ENCODE measurements at regions of chr2 and their contacts with region 1.

Region 1: DNA sequence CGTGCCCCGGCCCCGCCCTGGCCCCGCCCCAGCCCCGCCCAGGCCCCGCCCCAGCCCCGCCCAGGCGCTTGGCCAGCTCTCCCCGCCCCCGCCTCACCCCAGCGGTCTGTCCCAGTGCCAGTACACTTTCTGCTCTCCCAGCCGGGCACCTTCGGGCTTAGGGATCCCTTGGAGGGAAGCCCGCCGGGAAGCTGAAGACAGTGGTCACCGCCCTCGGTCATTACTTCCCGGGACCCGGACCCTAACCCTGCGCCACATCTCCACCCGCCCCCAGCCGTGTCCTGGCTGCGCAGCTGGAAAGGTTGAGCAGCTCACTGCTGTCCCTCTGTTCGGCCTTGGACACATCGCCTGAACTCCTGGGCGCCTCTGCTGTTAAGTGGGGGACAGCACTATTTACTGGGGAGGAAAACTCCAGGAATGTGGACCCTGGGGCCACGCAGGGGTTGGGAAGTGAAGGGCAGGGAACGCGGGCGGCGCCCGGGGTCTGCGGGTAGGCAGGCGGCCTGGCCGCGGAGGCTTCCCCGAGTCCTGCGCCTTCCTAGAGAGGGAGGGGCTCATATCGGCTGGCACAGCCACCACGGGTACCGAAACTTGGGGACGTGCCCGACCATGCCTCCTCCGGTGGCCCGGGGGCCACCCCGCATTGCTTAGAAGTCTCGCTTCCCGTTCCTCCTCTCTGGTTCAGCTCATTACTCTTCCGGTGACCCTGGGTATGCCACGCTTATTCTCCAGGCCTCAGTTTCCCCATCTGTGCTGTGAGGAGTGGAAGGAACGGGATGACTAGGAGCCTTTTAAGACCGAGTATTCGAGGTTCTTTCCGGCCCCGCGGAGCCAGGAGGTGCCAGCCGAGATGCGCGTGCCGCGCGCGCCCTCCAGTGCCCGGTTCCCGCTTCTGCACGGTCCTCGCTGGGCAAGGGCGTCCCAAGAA is 121.0 kb downstream of the GYPC start:
- ATAC-seq: peak; percentile 86 to 92 (median 88)
- H3K4me3 ChIP-seq: peak overlapping the region; percentile 32 to 61 (median 47)
- H3K27ac ChIP-seq: no peak overlapping the region
- H3K4me1 ChIP-seq: peaks cover 0 to 7% of the 10 kb centered on the region in 2 donors

Region 2: DNA sequence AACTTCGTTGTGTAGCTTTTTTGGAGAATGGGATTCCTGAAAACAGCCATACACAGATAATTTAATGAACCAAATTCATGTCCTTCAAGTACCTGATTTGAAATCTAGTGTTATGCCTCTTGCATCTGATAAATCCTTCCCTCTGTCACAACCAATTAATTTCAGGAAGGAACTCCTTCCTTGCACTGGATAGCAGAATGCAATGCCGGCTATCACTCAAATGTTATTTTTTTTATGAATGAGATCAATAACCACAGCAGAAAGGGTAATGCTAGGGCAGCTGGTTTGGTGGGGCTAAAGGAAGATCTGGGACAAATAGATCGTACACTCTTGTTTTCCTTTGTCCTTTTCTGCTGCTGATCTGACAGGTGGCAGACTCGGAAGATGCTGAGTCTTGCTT is 1020.5 kb before region 1 on chr2:
- in situ Hi-C with region 1: loop called in 1 of 9 experiments (anchors 25 kb)
- ATAC-seq: no peak
- H3K4me3 ChIP-seq: no peak overlapping the region
- H3K27ac ChIP-seq: no peak overlapping the region
- H3K4me1 ChIP-seq: peaks cover 2 to 7% of the 10 kb centered on the region in 2 donors

Region 3: GRCh38 chr2:126244937-126245336 is 532.0 kb before region 1 on chr2:
- in situ Hi-C with region 1: loop called in 2 of 9 experiments (anchors 10 to 25 kb)
- ATAC-seq: peak in 3 of 8 experiments; percentile 62 to 84 (median 74)
- H3K4me3 ChIP-seq: no peak overlapping the region
- H3K27ac ChIP-seq: no peak overlapping the region
- H3K4me1 ChIP-seq: peaks cover 5 to 11% of the 10 kb centered on the region in 2 donors

Region 4: DNA sequence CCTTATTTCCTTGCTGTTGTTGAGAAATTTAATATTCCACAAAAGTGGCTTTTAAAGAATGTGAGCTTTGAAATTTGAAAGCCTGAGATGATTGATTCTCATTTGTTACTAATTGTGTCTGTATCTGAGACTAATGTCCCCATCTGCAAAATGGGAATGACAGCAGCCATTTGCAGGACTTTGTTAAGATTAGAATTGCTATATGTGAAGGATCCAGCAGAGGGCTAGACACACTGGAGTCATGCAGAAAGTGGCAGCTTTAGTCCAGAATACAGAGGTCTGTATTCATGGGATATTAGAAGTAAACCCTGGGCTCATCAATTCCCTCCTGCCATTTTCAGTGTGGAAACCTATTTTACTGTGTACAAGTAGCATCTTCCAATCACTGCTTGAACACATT is 417.5 kb before region 1 on chr2:
- in situ Hi-C with region 1: loop called in 1 of 9 experiments (anchors 25 kb)
- ATAC-seq: peak in 2 of 8 experiments; percentile 35 to 43
- H3K4me3 ChIP-seq: no peak overlapping the region
- H3K27ac ChIP-seq: no peak overlapping the region
- H3K4me1 ChIP-seq: no peaks in the 10 kb centered on the region

Region 5: GRCh38 chr2:126513033-126513432 is 263.9 kb before region 1 on chr2:
- in situ Hi-C with region 1: loop called in 2 of 9 experiments (anchors 25 kb)
- ATAC-seq: peak in 7 of 8 experiments; percentile 71 to 94 (median 86)
- H3K4me3 ChIP-seq: no peak overlapping the region
- H3K27ac ChIP-seq: no peak overlapping the region
- H3K4me1 ChIP-seq: peaks cover 4 to 15% of the 10 kb centered on the region in 2 donors

Region 6: DNA sequence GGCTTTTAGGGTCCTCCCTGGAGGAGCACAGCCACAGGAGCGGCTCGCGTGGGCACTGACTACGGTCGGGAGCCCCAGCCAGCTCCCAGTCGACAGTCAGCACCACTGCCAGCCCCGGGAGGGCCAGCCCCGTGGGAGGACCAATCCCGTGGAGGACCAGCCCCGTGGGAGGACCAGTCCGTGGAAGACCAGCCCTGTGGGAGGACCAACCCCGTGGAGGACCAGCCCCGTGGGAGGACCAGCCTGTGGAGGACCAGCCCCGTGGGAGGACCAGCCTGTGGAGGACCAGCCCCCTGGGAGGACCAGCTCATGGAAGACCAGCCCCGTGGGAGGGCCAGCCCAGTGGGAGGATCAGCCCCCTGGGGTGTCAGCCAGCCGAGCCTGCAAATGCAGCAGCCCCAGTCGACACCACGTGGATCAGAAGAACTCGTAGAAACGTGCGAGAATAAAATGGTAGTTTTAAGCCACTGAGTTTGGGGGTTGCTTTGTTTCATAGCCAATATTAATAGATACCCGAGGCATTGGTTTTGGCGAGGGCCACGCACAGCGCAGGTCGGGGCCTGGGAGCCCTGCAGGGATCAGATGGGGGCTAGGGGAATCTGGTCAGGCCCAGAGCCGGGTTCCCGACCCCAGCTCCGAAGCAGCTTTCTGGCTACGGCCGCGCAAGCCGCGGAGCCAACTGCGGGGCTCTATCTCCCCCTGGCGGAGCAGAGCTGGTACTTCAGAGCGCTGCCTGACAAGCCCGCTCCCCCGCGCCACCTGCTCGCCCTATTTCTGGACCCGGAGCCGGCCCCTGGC is 194.7 kb after region 1 on chr2:
- in situ Hi-C with region 1: loop called in 1 of 9 experiments (anchors 25 kb)
- ATAC-seq: peak; percentile 88 to 96 (median 94)
- H3K4me3 ChIP-seq: peak overlapping the region in 2 of 5 donors; percentile 17 to 19
- H3K27ac ChIP-seq: no peak overlapping the region
- H3K4me1 ChIP-seq: peaks cover 0 to 2% of the 10 kb centered on the region in 2 donors